ENCODE measurements at regions of chr1 and their contacts with region 1.

Region 1: GRCh38 chr1:113140588-113141446 is 67.8 kb downstream of the LRIG2 start:
- DNase-seq: peak in 2 of 3 donors; percentile 47 to 72
- ATAC-seq: peak; percentile 93 to 98 (median 96)
- H3K4me3 ChIP-seq: peak overlapping the region; percentile 7 to 35 (median 16)
- H3K27ac ChIP-seq: peak overlapping the region in 1 of 3 donors; percentile 26
- H3K4me1 ChIP-seq: peaks cover 0 to 4% (median 0%) of the 10 kb centered on the region in 4 donors
- H3K27me3 ChIP-seq: no peaks in the 10 kb centered on the region
- CTCF ChIP-seq: peak; percentile 81 to 88 (median 86)
- POLR2A ChIP-seq: no peak

Region 2: DNA sequence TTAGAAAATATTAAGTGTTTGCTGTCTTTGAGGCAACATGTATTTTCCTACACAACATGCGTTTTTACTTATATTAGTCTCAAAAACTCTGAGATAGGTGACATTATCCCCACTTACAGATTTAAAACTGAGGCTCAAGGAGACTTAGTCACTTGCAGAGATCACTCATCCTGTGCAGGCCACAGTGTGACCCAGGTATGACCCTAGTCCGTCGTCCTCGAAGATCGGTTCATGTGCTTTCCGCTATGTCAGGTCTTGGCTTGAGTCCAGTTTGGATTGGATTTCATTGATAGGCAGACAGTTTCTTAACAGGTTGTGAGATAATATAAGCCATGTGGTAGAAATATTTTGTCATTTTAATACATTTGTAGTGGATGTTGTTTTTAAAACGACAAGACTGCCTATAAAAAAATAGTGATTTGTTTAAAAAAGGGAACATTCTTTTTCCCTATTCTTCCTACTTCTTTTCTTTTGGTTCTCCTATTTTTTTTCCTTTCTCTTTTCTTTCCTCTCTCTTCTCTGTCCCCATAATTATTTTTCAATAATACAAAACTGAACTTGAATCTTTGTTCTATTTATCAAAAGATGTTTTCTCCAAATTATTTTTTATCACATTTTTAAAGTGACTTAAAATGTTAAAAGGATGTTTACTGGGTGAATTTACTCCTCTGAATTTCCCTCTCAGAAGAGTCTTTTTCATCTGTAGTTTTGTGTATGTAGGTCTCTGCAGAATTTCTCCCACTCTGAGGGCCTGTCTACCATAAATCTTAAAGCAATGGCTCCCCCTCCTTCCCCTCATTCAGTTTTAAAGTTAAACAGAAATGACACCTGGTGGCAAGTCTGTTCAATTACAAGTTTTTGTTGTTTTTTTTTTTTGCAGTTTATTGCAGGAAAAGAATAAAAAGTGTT is 536.7 kb after region 1 on chr1:
- intact Hi-C with region 1: loop called (anchors 5 to 10 kb)
- DNase-seq: peak; percentile 57 to 81 (median 72)
- ATAC-seq: peak; percentile 95 to 98 (median 96)
- H3K4me3 ChIP-seq: no peak overlapping the region
- H3K27ac ChIP-seq: peak overlapping the region in 1 of 3 donors; percentile 24
- H3K4me1 ChIP-seq: peaks cover 0 to 11% (median 0%) of the 10 kb centered on the region in 4 donors
- H3K27me3 ChIP-seq: no peaks in the 10 kb centered on the region
- CTCF ChIP-seq: peak; percentile 50 to 54 (median 54)
- POLR2A ChIP-seq: no peak

Region 3: GRCh38 chr1:113684153-113684541 is 543.3 kb after region 1 on chr1:
- intact Hi-C with region 1: loop called (anchors 5 to 10 kb)
- DNase-seq: peak in 1 of 3 donors; percentile 24
- ATAC-seq: peak; percentile 33 to 49 (median 39)
- H3K4me3 ChIP-seq: no peak overlapping the region
- H3K27ac ChIP-seq: no peak overlapping the region
- H3K4me1 ChIP-seq: no peaks in the 10 kb centered on the region
- H3K27me3 ChIP-seq: no peaks in the 10 kb centered on the region
- CTCF ChIP-seq: no peak
- POLR2A ChIP-seq: no peak

Measured in right lobe of liver (tissue), 6 donors.